Caco-2 (cell line): ENCODE measurements at regions of chr16 and their contacts with region 1.

Region 1: DNA sequence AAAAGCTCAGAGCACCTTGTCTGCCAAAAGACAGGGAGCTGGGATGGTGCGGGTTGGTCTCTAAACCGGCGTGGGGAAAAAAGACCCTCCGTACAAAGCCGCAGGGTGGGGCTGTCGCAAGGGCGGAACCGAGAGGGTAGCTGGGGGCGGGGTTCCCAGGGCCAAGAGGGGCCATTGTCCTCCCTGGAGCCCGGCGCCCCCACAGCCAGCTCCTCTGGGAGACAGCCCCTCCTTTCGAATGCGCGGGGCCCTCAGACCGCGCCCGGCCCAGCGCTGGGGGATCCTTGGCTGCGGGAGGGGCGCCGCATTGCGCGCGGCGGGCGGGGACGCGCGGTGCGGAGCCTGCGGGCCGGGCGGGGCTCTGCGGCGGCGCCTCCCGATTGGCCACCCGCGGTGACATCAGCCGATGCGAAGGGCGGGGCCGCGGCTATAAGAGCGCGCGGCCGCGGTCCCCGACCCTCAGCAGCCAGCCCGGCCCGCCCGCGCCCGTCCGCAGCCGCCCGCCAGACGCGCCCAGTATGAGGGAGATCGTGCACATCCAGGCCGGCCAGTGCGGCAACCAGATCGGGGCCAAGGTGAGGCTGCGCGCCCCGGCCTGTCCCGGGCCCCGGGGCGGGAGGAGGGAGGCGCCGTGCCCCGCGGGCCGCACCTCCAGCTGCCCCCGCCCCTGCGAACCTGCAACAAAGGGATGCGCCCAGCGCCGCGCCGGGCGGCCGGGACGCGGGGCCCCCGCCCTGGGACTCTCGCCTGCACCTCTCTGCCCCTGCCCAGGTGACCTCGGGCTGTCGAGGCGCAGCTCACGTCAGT is at the start of gene TUBB3:
- DNase-seq: peak; percentile 80 to 90
- H3K4me3 ChIP-seq: peak within 1 kb of the TSS; percentile 72
- H3K4me3 Mint-ChIP-seq: peak within 1 kb of the TSS; percentile 85
- H3K27ac Mint-ChIP-seq: peak within 1 kb of the TSS; percentile 73
- H3K4me1 ChIP-seq: peaks cover 35% of the 10 kb centered on the region
- H3K4me1 Mint-ChIP-seq: peaks cover 6% of the 10 kb centered on the region
- H3K27me3 ChIP-seq: 0 out of 2 replicates have a peak, but pooled peaks cover 2% of the 10 kb centered on the region
- H3K27me3 Mint-ChIP-seq: no peaks in the 10 kb centered on the region
- CTCF ChIP-seq: peak in 1 of 2 experiments; percentile 1
- total RNA-seq, gene TUBB3: 31.3 and 37.5 TPM in 2 replicates

Region 2: GRCh38 chr16:89586853-89587252 is 336.2 kb before region 1 on chr16:
- CTCF ChIA-PET with region 1: no interaction called
- POLR2A ChIA-PET with region 1: no interaction called
- intact Hi-C with region 1: no loop called
- DNase-seq: no peak
- H3K4me3 ChIP-seq: no peak overlapping the region
- H3K4me3 Mint-ChIP-seq: no peak overlapping the region
- H3K27ac Mint-ChIP-seq: no peak overlapping the region
- H3K4me1 ChIP-seq: no peaks in the 10 kb centered on the region
- H3K4me1 Mint-ChIP-seq: no peaks in the 10 kb centered on the region
- H3K27me3 ChIP-seq: no peaks in the 10 kb centered on the region
- H3K27me3 Mint-ChIP-seq: no peaks in the 10 kb centered on the region
- CTCF ChIP-seq: no peak

Region 3: DNA sequence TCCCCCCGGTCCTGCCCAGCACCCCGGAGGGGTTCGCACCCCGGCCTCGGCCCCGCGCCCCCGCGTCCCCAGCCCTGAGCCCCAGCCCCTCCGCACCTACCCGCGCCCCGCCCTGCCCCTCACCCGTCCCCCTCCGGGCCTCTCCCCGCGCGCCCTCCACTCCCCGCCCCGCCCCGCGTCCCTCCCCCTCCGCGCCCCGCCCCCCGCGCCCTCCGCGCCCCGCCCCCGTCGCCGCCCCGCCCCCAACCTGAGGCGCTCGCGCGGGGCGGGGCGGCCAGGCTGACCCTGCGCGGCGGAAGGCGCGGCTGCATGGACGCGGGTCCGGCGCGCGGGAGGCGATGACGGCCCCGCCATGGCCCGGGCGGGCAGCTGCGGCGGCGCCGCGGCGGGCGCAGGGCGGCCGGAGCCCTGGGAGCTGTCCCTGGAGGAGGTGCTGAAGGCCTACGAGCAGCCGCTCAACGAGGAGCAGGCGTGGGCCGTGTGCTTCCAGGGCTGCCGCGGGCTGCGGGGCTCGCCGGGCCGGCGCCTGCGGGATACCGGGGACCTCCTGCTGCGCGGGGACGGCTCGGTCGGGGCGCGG is 94.8 kb before region 1 on chr16 and contains the start of gene SPIRE2:
- CTCF ChIA-PET with region 1: no interaction called
- POLR2A ChIA-PET with region 1: interaction called, 5 read pairs
- intact Hi-C with region 1: loop called (anchors 10 kb)
- DNase-seq: peak; percentile 78 to 91
- H3K4me3 ChIP-seq: peak within 1 kb of the TSS; percentile 89
- H3K4me3 Mint-ChIP-seq: peak within 1 kb of the TSS; percentile 78
- H3K27ac Mint-ChIP-seq: peak within 1 kb of the TSS; percentile 85
- H3K4me1 ChIP-seq: peaks cover 38% of the 10 kb centered on the region
- H3K4me1 Mint-ChIP-seq: peaks cover 10% of the 10 kb centered on the region
- H3K27me3 ChIP-seq: no peaks in the 10 kb centered on the region
- H3K27me3 Mint-ChIP-seq: no peaks in the 10 kb centered on the region
- CTCF ChIP-seq: no peak
- total RNA-seq, gene SPIRE2: 29.6 and 31.3 TPM in 2 replicates

Region 4: GRCh38 chr16:89972244-89973234 is 49.5 kb after region 1 on chr16:
- CTCF ChIA-PET with region 1: interaction called, 7 read pairs
- POLR2A ChIA-PET with region 1: interaction called, 13 read pairs
- intact Hi-C with region 1: no loop called
- DNase-seq: peak; percentile 92 to 96
- H3K4me3 ChIP-seq: peak overlapping the region; percentile 99
- H3K4me3 Mint-ChIP-seq: peak overlapping the region; percentile 100
- H3K27ac Mint-ChIP-seq: peak overlapping the region; percentile 100
- H3K4me1 ChIP-seq: peaks cover 14% of the 10 kb centered on the region
- H3K4me1 Mint-ChIP-seq: peaks cover 28% of the 10 kb centered on the region
- H3K27me3 ChIP-seq: no peaks in the 10 kb centered on the region
- H3K27me3 Mint-ChIP-seq: no peaks in the 10 kb centered on the region
- CTCF ChIP-seq: no peak